ENCODE measurements at regions of chr14 and their contacts with region 1.

Region 1: DNA sequence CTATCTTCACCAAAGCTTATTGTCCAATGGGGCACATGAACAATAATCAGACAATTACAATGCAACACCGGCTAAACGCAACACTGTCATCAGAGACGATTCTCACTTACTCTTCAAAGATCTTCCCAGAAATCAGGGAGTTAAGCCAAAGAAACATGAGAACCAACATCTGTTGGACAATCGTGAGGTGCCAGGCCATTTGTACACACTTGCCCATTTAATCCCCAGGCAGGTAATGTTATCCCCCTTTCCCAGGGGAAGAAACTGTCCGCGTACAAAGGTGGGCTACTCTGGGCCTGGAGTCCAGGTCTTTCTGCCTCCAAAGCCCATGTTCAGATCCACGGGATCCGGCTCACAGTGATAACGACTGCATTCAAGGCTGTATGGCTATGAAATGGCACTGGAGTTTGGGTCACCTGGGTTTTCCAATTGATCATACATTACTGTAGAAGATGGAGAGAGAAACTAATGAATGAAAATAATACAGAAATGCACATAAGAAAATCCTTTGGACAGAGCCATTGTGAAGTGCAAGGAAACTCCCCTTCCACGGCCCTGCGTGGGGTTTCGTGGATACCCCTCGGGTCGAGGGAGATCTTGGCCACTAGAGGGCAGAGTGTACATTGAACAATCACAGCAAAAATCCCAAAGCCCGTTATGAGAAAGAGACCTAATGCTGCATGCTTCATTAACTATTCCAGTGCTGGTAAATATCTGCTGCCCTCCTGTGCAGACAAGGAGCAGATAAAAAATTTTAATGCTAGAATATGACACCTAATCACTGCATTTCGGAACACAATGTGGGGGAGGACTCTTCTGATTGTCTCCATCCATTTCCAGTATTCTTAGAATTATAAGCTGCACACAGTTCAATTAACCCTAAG is 111.4 kb downstream of the EGLN3 start:
- DNase-seq: peak; percentile 38
- H3K4me3 Mint-ChIP-seq: no peak overlapping the region
- H3K27ac Mint-ChIP-seq: no peak overlapping the region
- H3K4me1 Mint-ChIP-seq: peaks cover 51% of the 10 kb centered on the region
- H3K27me3 Mint-ChIP-seq: peaks cover 7% of the 10 kb centered on the region

Region 2: DNA sequence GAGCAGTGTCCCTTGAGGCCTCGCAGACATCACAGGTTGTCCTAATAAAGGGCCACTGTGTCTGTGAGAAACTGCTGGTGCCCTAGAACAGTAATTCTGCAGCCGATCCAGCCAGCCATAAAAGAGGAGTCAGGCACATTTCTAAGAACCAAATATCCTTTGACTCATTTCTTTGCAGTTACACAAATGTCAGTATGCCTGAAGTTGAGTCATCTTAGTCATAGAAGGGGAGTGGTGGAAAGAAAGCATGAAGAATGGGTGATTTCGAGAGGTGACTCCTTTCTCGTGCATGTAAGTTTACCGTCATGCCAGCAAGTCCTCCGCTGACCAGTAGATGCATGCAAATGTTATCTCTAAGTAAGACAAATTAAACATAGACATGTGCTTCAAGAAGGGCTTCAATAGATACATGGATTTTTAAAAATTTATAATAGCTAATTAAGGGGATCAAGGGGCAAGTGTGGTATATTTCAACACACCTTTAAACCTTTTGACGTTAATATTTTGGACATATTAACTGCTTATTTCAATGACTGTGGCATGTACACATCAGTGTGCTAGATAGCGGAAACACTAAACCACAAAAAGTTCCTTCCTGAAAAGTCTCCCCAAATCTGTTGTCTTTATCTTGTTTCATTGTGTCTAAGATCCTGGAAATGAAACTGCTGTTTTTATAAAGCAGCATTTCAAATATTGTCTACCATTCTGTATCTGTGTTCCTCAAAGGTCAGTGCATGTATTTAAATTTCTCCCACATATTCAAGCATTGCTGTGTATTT is 403.3 kb before region 1 on chr14:
- intact Hi-C with region 1: loop called (anchors 2 kb)
- DNase-seq: no peak
- H3K4me3 Mint-ChIP-seq: no peak overlapping the region
- H3K27ac Mint-ChIP-seq: peak overlapping the region; percentile 49
- H3K4me1 Mint-ChIP-seq: peaks cover 11% of the 10 kb centered on the region
- H3K27me3 Mint-ChIP-seq: no peaks in the 10 kb centered on the region

Region 3: DNA sequence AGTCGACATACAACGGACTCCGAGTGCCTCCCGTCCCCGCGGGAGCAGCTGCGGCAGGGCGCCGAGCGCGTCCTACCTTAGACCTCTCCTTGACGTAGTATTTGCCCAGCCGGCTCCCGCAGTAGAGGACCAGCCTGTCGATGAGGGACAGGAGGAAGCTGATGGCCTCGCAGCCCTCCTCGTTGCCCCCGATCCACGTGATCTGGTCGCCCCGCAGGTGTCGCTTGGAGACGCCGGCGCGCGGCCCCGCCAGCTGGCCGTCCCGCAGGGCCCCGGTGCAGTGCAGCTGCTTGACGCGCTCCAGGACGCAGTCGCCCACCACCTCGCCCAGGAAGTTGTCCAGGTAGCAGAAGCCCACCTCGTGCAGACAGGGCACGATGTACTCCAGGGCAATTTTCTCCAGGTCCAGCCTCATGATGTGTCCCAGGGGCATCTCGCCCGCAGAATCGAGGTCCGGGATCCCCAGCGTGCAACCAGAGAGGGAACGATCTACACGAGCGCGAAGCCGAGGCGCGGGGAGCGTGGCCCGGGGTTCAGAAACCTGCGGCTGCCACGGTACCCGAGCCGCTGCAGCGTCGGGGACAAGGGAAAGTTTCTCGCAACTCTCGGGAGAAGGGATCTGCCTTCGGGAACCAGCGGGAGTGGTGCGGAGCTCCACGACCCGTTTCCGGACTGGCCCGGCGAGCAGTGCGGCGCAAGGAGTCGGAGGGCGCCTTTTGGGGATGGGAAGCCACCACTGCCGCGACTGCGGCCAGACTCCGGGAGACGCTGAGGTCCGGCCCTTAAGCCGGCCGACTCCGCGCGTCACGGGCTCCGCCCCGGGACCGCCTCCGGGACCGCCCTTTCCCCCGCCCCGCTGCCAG is 111.1 kb after region 1 on chr14 and contains the start of gene EGLN3:
- intact Hi-C with region 1: loop called (anchors 5 kb)
- DNase-seq: peak; percentile 68
- H3K4me3 Mint-ChIP-seq: peak within 1 kb of the TSS; percentile 79
- H3K27ac Mint-ChIP-seq: no peak within 1 kb of the TSS
- H3K4me1 Mint-ChIP-seq: peaks cover 41% of the 10 kb centered on the region
- H3K27me3 Mint-ChIP-seq: peaks cover 50% of the 10 kb centered on the region
- total RNA-seq, gene EGLN3: 16.0 and 17.0 TPM in 2 replicates

Region 4: DNA sequence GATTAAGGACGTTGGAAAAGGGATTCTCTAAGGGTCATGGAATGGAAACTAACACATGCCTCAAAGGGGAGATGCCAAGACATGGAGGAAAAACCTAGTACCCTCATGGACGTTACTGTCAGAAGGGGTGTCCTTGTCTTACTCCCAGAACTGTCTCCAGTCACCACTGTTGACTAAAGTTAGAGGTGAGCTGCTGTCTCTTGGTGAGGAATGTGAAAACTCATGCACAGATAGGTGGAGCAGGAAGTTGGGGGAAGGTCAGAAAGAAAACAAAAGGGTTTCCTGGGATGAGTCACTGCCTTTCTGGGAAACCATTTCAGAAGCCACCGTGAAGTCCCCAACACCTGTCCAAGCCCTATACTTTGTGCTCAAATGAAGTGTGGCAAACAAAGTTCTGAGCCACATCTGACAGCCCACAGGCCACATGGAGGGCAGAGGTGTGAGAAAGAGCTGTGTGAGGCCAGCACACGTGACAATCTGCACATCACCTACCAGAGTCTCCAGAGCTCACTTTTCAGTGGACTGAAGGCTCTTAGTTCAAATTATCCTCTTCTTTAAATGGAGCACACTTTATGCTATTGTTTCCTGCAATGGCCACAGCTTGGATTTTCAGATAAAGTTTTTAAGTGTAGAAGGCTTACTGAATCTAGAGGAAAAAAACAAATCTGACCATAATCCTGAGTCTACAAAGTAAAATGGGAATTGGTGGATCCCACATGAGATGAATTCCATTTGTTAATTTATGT is 204.4 kb after region 1 on chr14:
- intact Hi-C with region 1: loop called (anchors 2 kb)
- DNase-seq: peak; percentile 83
- H3K4me3 Mint-ChIP-seq: peak overlapping the region; percentile 61
- H3K27ac Mint-ChIP-seq: peak overlapping the region; percentile 82
- H3K4me1 Mint-ChIP-seq: peaks cover 68% of the 10 kb centered on the region
- H3K27me3 Mint-ChIP-seq: no peaks in the 10 kb centered on the region

Region 5: GRCh38 chr14:34199564-34199963 is 360.1 kb after region 1 on chr14:
- intact Hi-C with region 1: loop called (anchors 2 kb)
- DNase-seq: peak; percentile 16
- H3K4me3 Mint-ChIP-seq: no peak overlapping the region
- H3K27ac Mint-ChIP-seq: peak overlapping the region; percentile 68
- H3K4me1 Mint-ChIP-seq: peaks cover 54% of the 10 kb centered on the region
- H3K27me3 Mint-ChIP-seq: peaks cover 25% of the 10 kb centered on the region

Region 6: GRCh38 chr14:34322940-34323418 is 483.5 kb after region 1 on chr14:
- intact Hi-C with region 1: loop called (anchors 10 kb)
- DNase-seq: peak; percentile 35
- H3K4me3 Mint-ChIP-seq: no peak overlapping the region
- H3K27ac Mint-ChIP-seq: no peak overlapping the region
- H3K4me1 Mint-ChIP-seq: peaks cover 2% of the 10 kb centered on the region
- H3K27me3 Mint-ChIP-seq: peaks cover 3% of the 10 kb centered on the region